ENCODE measurements at regions of chr2 and their contacts with region 1.

Region 1: DNA sequence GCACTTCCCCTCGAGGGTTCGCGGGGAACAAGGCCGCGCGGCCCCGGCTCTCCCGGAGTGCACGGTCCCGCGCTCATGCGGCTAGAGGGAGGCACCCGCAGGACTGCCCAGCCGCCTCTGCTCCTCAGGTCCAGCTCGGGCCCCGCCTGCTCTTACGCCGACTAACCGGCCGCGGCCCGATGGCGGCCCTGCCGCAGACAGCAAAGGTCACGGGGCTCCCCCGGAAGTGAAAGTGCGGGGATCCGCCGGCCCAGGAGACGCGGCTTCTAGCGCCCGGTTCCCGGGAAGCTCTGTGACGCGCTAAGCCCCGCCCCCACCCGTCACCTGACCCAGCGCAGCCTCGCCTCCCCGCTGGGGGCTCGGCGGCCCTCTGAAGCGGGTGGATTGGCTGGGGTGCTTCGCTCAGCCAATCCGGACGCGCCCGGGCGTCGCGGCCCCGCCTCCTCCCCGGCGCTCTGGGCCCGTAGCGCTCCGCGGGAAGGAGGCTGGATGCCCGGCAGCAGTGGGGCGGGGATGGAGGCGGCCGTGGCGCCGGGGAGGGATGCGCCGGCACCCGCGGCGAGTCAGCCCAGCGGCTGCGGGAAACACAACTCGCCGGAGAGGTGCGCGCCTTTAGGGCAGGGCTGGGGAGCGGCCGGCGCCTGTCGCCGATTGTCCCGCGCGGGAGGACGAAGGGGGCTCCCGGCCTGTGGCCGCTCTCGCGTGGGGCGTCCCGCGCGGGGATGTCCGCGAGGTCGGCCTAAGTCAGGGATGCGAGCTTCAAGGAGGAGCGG is at the start of gene SCLY:
- DNase-seq: peak; percentile 98
- H3K4me3 Mint-ChIP-seq: peak within 1 kb of the TSS; percentile 91
- H3K27ac Mint-ChIP-seq: peak within 1 kb of the TSS; percentile 85
- H3K4me1 Mint-ChIP-seq: peaks cover 47% of the 10 kb centered on the region
- H3K27me3 Mint-ChIP-seq: peaks cover 8% of the 10 kb centered on the region
- total RNA-seq, gene SCLY: 47.9 to 51.8 TPM

Region 2: DNA sequence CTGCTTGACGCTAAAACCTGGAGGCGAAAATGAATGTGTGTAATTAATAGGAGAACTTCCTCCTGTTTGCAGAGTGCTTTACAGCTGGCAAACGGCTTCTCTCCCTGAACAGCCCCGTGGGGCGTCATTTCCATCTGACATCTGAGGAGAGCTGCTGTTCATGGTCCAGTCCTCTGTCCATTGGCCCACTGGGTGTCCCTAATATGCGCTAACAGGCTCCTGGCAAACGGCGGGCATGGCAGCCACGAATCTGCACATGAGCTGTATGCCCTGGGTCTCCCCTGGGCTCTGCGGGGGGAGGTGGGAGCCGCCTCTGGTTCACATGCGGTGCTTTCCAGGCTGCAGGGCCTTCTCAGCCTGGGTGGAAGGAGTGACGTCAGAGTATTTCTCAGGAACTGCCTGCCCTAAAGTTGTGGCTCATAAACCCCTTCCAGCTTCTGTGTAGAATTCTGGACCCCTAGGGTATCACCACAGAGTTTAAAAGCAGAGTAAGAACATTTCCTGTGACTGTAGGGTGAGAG is 360.2 kb before region 1 on chr2:
- CTCF ChIA-PET with region 1: no interaction called
- POLR2A ChIA-PET with region 1: no interaction called
- intact Hi-C with region 1: loop called (anchors 5 kb)
- DNase-seq: peak; percentile 90
- H3K4me3 Mint-ChIP-seq: peak overlapping the region; percentile 54
- H3K27ac Mint-ChIP-seq: peak overlapping the region; percentile 98
- H3K4me1 Mint-ChIP-seq: peaks cover 94% of the 10 kb centered on the region
- H3K27me3 Mint-ChIP-seq: no peaks in the 10 kb centered on the region

Region 3: DNA sequence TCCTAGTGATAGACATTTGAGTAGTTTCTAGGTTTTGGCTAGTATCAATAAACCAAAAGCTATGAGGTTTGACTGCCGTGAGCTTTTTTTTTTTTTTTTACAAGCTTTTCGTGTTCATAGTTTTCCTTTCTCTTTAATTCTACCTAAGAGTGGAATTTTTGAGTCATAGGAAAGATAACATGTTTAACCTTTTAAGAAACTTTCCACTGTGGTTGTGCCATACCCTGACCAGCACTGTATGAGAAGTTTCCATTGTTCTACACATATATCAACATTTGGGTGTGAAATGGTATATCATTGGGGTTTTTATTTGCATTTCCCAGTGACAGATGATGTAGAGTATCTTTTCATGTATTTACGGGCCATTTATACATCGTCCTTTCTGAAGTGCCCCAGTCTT is 62.2 kb before region 1 on chr2:
- CTCF ChIA-PET with region 1: no interaction called
- POLR2A ChIA-PET with region 1: interaction called, 11 read pairs
- intact Hi-C with region 1: loop called (anchors 1 kb)
- DNase-seq: peak; percentile 65
- H3K4me3 Mint-ChIP-seq: peak overlapping the region; percentile 62
- H3K27ac Mint-ChIP-seq: peak overlapping the region; percentile 93
- H3K4me1 Mint-ChIP-seq: peaks cover 57% of the 10 kb centered on the region
- H3K27me3 Mint-ChIP-seq: no peaks in the 10 kb centered on the region

Region 4: GRCh38 chr2:238203094-238203972 is 142.6 kb after region 1 on chr2 and contains the start of gene ILKAP:
- CTCF ChIA-PET with region 1: no interaction called
- POLR2A ChIA-PET with region 1: no interaction called
- intact Hi-C with region 1: loop called (anchors 10 kb)
- DNase-seq: peak; percentile 91
- H3K4me3 Mint-ChIP-seq: peak within 1 kb of the TSS; percentile 83
- H3K27ac Mint-ChIP-seq: peak within 1 kb of the TSS; percentile 84
- H3K4me1 Mint-ChIP-seq: peaks cover 47% of the 10 kb centered on the region
- H3K27me3 Mint-ChIP-seq: no peaks in the 10 kb centered on the region
- total RNA-seq, gene ILKAP: 46.7 to 50.2 TPM